ENCODE measurements at regions of chr17 and their contacts with region 1.

Region 1: GRCh38 chr17:80761110-80761871 is 216.7 kb downstream of the RPTOR start:
- DNase-seq: peak; percentile 71
- H3K4me3 Mint-ChIP-seq: peak overlapping the region; percentile 77
- H3K27ac Mint-ChIP-seq: peak overlapping the region; percentile 99
- H3K4me1 Mint-ChIP-seq: peaks cover 81% of the 10 kb centered on the region
- H3K27me3 Mint-ChIP-seq: no peaks in the 10 kb centered on the region

Region 2: GRCh38 chr17:80605326-80606066 is 155.8 kb before region 1 on chr17:
- intact Hi-C with region 1: loop called (anchors 2 kb)
- DNase-seq: peak; percentile 31
- H3K4me3 Mint-ChIP-seq: no peak overlapping the region
- H3K27ac Mint-ChIP-seq: peak overlapping the region; percentile 35
- H3K4me1 Mint-ChIP-seq: peaks cover 66% of the 10 kb centered on the region
- H3K27me3 Mint-ChIP-seq: peaks cover 2% of the 10 kb centered on the region

Region 3: DNA sequence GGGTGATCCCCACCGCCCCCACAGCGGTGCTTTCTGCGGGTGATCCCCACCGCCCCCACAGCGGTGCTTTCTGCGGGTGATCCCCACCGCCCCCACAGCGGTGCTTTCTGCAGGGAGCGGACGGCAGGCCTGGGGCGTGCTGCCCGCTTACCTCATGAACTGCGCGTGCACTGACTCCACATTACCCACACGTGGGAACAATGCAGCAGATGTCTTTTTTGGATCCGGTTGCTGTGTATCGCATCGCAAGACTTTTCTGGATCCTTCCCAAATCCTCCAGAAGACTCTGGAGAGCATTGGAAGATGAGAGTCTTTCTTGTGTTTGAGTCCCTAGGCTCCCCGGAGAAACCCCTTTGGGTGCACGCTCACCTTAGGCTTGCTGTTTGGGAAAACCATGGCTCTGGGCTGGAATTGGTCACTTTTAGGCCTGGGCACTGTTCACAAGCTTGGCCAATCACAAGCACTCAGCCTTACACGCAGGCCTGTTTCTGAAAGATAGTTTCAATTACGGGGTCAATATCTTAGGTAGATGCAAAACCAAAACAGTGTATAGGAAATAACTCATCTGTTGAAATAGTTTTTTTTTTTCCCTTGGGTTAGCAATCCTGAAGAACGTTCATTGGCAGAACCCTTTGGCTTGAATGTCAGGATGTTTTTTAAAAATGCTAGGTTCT is 14.9 kb before region 1 on chr17:
- intact Hi-C with region 1: loop called (anchors 2 kb)
- DNase-seq: no peak
- H3K4me3 Mint-ChIP-seq: no peak overlapping the region
- H3K27ac Mint-ChIP-seq: peak overlapping the region; percentile 18
- H3K4me1 Mint-ChIP-seq: peaks cover 48% of the 10 kb centered on the region
- H3K27me3 Mint-ChIP-seq: no peaks in the 10 kb centered on the region

Region 4: GRCh38 chr17:80780381-80781198 is 19.3 kb after region 1 on chr17:
- intact Hi-C with region 1: loop called (anchors 1 kb)
- DNase-seq: no peak
- H3K4me3 Mint-ChIP-seq: peak overlapping the region; percentile 75
- H3K27ac Mint-ChIP-seq: peak overlapping the region; percentile 94
- H3K4me1 Mint-ChIP-seq: peaks cover 86% of the 10 kb centered on the region
- H3K27me3 Mint-ChIP-seq: no peaks in the 10 kb centered on the region

Region 5: DNA sequence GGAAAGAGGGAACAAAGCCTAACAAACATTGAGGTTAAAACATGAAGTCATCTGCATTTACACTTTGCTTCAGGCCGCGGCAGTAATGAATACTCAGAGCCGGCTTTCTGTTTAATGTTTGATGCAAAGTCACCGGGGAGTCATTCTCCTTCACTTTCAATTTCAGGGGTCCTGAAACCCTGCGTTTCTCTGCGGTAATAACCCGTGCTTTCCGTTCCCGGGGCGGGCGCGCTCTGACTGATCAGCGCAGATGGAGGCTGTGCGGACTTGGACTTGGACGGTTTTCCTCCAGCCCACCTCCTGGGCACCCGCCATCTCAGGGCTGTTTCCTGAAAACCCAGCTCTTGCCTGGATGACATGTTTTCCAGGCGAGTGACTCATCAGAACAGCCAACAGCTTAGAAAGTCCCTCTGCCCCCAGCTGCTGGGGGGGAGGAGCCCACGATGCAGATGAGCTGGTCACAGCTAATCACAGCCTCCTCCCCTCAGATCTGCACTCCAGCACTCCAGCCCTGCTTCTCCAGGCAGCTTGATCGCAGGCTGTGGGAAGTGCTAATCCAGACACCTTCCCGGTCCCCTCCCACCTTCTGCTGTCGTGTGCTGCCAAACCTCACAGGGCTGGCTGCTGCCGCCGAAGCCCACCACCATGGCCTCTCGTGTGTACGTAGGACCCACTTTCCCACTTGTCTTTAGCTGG is 71.7 kb after region 1 on chr17:
- intact Hi-C with region 1: loop called (anchors 1 kb)
- DNase-seq: peak; percentile 84
- H3K4me3 Mint-ChIP-seq: peak overlapping the region; percentile 76
- H3K27ac Mint-ChIP-seq: peak overlapping the region; percentile 91
- H3K4me1 Mint-ChIP-seq: peaks cover 60% of the 10 kb centered on the region
- H3K27me3 Mint-ChIP-seq: no peaks in the 10 kb centered on the region

Region 6: DNA sequence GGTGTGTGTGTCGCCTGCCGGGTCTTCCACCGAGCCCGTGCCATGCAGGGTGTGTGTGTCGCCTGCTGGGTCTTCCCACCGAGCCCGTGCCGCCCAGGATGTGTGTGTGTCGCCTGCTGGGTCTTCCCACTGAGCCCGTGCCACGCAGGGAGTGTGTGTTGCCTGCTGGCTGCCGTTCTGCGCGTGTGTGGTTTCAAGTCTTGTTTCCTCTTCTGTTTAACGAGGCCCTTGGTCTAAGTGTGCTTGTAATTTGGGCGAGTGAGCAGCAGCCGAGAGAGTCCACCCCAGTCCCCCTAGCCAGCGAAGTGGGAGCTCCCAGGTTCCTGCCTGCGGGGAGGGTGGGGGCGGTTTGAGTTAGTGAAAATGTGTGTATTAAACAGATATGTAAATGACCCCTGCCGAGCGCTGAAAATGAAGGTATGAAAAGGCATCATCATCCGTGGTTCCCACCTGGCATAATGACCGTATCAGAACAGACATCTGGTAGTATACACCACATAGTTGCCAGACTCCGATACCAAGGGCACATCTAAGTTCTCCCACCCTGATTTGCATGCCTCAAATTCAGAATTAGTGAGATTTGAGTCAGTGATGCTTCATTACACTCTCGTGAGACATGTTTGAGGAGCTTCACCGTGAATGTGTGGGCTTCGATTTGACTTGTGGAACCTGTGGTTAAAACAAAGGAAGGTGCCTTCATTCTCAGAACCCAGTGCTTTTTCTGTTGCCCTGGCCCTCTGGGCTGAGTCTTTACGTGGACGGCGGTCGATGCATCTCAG is 115.8 kb after region 1 on chr17:
- intact Hi-C with region 1: loop called (anchors 1 kb)
- DNase-seq: peak; percentile 64
- H3K4me3 Mint-ChIP-seq: peak overlapping the region; percentile 65
- H3K27ac Mint-ChIP-seq: peak overlapping the region; percentile 96
- H3K4me1 Mint-ChIP-seq: peaks cover 55% of the 10 kb centered on the region
- H3K27me3 Mint-ChIP-seq: no peaks in the 10 kb centered on the region